Adrenal gland (tissue), 19 donors: ENCODE measurements at regions of chr1 and their contacts with region 1.

Region 1: GRCh38 chr1:202348509-202349205 is at the start of gene PPP1R12B:
- DNase-seq: peak; percentile 96 to 99 (median 99)
- H3K4me3 ChIP-seq: peak within 1 kb of the TSS; percentile 56 to 96 (median 84)
- H3K27ac ChIP-seq: peak within 1 kb of the TSS; percentile 56 to 92 (median 78)
- H3K4me1 ChIP-seq: peaks cover 0 to 18% of the 10 kb centered on the region in 2 donors
- H3K27me3 ChIP-seq: no peaks in the 10 kb centered on the region
- CTCF ChIP-seq: peak in 1 of 6 experiments; percentile 9
- POLR2A ChIP-seq: peak in 1 of 2 donors; percentile 70
- total RNA-seq, gene PPP1R12B: 16.6 to 43.9 (median 22.6) TPM

Region 2: DNA sequence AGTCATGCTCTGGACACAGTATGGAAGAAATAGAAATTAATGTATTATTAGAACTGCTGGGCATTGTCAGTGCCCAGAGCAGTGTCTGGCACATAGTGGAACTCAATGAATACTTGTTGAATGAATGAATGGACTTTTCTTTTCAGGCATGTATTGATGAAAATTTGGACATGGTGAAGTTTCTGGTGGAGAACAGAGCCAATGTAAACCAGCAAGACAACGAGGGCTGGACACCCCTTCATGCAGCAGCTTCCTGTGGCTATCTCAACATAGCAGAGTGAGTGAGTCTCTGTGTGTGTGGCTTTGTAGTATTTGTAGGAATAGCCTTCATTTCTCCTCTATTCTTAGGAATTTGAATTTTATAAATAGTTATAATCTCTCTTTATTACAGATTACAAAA is 68.0 kb after region 1 on chr1:
- intact Hi-C with region 1: loop called in 1 of 2 experiments (anchors 10 kb)
- DNase-seq: no peak
- H3K4me3 ChIP-seq: no peak overlapping the region
- H3K27ac ChIP-seq: no peak overlapping the region
- H3K4me1 ChIP-seq: peaks cover 5 to 8% of the 10 kb centered on the region in 2 donors
- H3K27me3 ChIP-seq: no peaks in the 10 kb centered on the region
- CTCF ChIP-seq: no peak
- POLR2A ChIP-seq: no peak